ENCODE measurements at regions of chrX and their contacts with region 1.

Region 1: DNA sequence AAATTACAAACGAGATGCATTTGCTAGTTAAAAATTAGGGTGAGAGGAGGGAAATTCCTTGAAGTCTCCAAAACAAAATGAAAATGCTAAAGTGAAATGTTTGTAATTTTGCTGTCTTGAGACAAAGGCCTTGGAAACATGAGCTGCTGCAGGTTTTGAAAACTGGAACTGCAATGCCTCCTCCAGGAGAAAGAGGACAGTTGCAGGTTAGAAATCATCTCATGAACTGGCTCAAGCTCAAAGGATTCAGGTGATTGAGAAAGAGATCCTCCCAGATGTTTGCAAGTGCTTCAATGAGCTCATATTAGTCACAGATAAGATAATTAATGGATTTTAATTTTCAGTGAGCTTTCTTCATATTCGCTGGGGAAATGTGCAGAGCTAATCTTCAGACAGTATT is 32.4 kb downstream of the SMPX start:
- DNase-seq: peak; percentile 27
- ATAC-seq: peak; percentile 56; the same call in 2 of the 3 replicates
- H3K4me3 ChIP-seq: no peak overlapping the region
- H3K27ac ChIP-seq: no peak overlapping the region
- H3K4me1 ChIP-seq: peaks cover 37% of the 10 kb centered on the region
- H3K27me3 ChIP-seq: no peaks in the 10 kb centered on the region
- CTCF ChIP-seq: peak; percentile 65
- EP300 ChIP-seq: no peak
- POLR2A ChIP-seq: no peak
- RAD21 ChIP-seq: no peak

Region 2: GRCh38 chrX:21479695-21480270 is 245.7 kb before region 1 on chrX:
- CTCF ChIA-PET with region 1: no interaction called
- POLR2A ChIA-PET with region 1: no interaction called
- in situ Hi-C with region 1: no loop called
- intact Hi-C with region 1: loop called (anchors 5 kb)
- DNase-seq: peak; percentile 48
- ATAC-seq: peak; percentile 89
- H3K4me3 ChIP-seq: no peak overlapping the region
- H3K27ac ChIP-seq: no peak overlapping the region
- H3K4me1 ChIP-seq: no peaks in the 10 kb centered on the region
- H3K27me3 ChIP-seq: no peaks in the 10 kb centered on the region
- CTCF ChIP-seq: peak; percentile 66
- EP300 ChIP-seq: no peak
- POLR2A ChIP-seq: no peak
- RAD21 ChIP-seq: no peak

Region 3: GRCh38 chrX:21940356-21940829 is 214.9 kb after region 1 on chrX and contains the start of gene SMS:
- CTCF ChIA-PET with region 1: no interaction called
- POLR2A ChIA-PET with region 1: no interaction called
- in situ Hi-C with region 1: no loop called
- intact Hi-C with region 1: loop called (anchors 10 kb)
- DNase-seq: peak; percentile 32
- ATAC-seq: peak; percentile 83
- H3K4me3 ChIP-seq: peak within 1 kb of the TSS; percentile 60 to 64 (median 62); a peak in 5 of 6 replicates
- H3K27ac ChIP-seq: peak within 1 kb of the TSS; percentile 40
- H3K4me1 ChIP-seq: peaks cover 33% of the 10 kb centered on the region
- H3K27me3 ChIP-seq: no peaks in the 10 kb centered on the region
- CTCF ChIP-seq: no peak
- EP300 ChIP-seq: no peak
- POLR2A ChIP-seq: peak; percentile 34 to 70; a peak in 3 of 4 replicates
- RAD21 ChIP-seq: no peak
- total RNA-seq, gene SMS: 91.9 and 115 TPM in 2 replicates

Measured in HepG2 (cell line).